Right ventricle myocardium inferior (tissue), 1 donor: ENCODE measurements at regions of chr2 and their contacts with region 1.

Region 1: DNA sequence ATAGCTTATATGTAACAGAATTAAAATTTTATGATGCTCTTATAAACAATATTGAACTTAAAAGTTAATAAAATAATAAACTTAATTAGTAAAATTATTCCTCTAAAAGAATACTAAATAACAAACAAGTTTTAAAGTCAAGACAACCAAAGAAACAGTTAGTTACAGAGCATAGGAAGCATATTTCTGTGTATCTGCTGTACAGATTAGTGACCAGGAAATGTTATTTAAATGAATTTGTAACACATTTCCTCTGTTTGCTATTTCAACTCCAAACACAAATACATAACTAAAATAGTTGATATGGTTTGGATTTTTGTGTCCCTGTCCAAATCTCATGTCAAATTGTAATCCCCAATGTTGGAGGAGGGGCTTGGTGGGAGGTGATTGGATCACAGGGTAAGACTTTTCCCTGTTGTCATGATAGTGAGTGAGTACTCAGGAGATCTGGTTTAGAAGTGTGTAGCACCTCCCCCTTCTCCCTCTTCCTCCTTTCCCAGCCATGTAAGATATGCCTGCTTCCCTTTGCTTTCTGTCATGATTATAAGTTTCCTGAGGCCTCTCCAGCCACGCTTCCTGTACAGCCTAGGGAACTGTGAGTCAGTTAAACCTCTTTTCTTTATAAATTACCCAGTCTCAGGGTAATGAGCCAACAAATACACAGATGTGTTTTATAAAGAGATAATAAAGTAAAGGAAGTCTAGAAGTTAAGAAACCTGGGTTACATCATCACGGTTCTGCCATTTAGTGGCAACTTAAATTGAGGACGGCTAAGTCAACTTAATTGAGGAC is 51.8 kb downstream of the ROCK2 start:
- DNase-seq: no peak
- ATAC-seq: peak; percentile 13

Region 2: GRCh38 chr2:11239666-11240462 is 52.8 kb before region 1 on chr2:
- intact Hi-C with region 1: loop called (anchors 5 kb)
- DNase-seq: no peak
- ATAC-seq: no peak

Region 3: DNA sequence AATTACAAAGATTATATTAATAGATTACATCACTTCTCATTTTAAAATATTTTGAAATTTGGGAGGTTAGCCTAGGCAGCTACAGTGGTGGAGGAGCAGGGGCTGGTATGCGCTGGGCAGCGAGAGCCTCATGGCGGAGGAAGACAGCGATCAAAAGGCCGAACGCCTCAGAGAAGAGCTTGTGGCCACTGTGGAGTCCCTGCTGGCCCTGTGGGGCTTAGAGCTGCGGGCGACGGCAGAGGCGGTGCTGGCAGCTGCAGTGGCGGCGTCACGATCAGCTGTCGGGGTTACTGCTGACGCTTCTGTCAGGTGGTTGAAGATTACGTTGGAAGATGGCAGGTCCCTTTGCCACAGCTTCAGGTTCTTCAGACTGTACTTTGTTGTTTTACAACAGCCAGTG is 35.6 kb before region 1 on chr2:
- intact Hi-C with region 1: no loop called
- DNase-seq: no peak
- ATAC-seq: no peak

Region 4: DNA sequence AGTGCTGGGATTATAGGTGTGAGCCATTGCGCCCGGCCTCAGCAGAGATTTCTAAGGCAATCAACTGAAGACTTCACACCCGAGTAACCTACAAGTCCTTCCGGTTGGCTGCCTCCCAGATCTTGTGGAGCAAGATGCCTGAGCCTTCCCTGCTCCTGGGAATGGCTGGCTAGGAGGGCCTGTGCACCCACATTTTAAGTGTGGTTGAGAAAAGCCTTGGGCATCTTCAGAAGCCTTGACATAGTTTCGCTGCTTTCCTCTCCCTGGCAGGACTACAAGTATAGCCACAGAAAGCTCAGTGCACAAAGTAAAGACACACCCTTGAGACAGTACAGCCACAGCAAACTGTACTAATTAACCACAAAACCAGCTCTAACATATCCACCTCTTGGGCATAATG is 138.1 kb after region 1 on chr2:
- intact Hi-C with region 1: no loop called
- DNase-seq: no peak
- ATAC-seq: no peak